ENCODE measurements at regions of chr9 and their contacts with region 1.

Region 1: GRCh38 chr9:36855448-36856315 is 178.4 kb downstream of the PAX5 start:
- DNase-seq: peak in 1 of 2 experiments; percentile 57
- H3K4me3 ChIP-seq: no peak overlapping the region
- H3K4me3 Mint-ChIP-seq: no peak overlapping the region
- H3K27ac Mint-ChIP-seq: no peak overlapping the region
- H3K4me1 ChIP-seq: peaks cover 9% of the 10 kb centered on the region; the same call in 1 of the 2 replicates
- H3K4me1 Mint-ChIP-seq: peaks cover 10% of the 10 kb centered on the region
- H3K27me3 ChIP-seq: no peaks in the 10 kb centered on the region
- H3K27me3 Mint-ChIP-seq: no peaks in the 10 kb centered on the region
- CTCF ChIP-seq: peak in 1 of 2 experiments; percentile 47

Region 2: GRCh38 chr9:36781533-36781932 is 74.1 kb before region 1 on chr9:
- CTCF ChIA-PET with region 1: no interaction called
- POLR2A ChIA-PET with region 1: no interaction called
- intact Hi-C with region 1: no loop called
- DNase-seq: no peak
- H3K4me3 ChIP-seq: no peak overlapping the region
- H3K4me3 Mint-ChIP-seq: no peak overlapping the region
- H3K27ac Mint-ChIP-seq: no peak overlapping the region
- H3K4me1 ChIP-seq: no peaks in the 10 kb centered on the region
- H3K4me1 Mint-ChIP-seq: no peaks in the 10 kb centered on the region
- H3K27me3 ChIP-seq: no peaks in the 10 kb centered on the region
- H3K27me3 Mint-ChIP-seq: peaks cover 28% of the 10 kb centered on the region
- CTCF ChIP-seq: no peak

Region 3: GRCh38 chr9:36798350-36799065 is 57.2 kb before region 1 on chr9:
- CTCF ChIA-PET with region 1: no interaction called
- POLR2A ChIA-PET with region 1: no interaction called
- intact Hi-C with region 1: loop called (anchors 1 kb)
- DNase-seq: peak; percentile 49 to 50
- H3K4me3 ChIP-seq: no peak overlapping the region
- H3K4me3 Mint-ChIP-seq: no peak overlapping the region
- H3K27ac Mint-ChIP-seq: no peak overlapping the region
- H3K4me1 ChIP-seq: no peaks in the 10 kb centered on the region
- H3K4me1 Mint-ChIP-seq: no peaks in the 10 kb centered on the region
- H3K27me3 ChIP-seq: no peaks in the 10 kb centered on the region
- H3K27me3 Mint-ChIP-seq: peaks cover 9% of the 10 kb centered on the region
- CTCF ChIP-seq: peak; percentile 31 to 47